H1 (cell line): ENCODE measurements at regions of chr11 and their contacts with region 1.

Region 1: GRCh38 chr11:106087815-106088435 is 10.5 kb downstream of the AASDHPPT start:
- DNase-seq: no peak
- H3K4me3 ChIP-seq: no peak overlapping the region
- H3K27ac ChIP-seq: no peak overlapping the region
- H3K4me1 ChIP-seq: no peaks in the 10 kb centered on the region
- H3K27me3 ChIP-seq: no peaks in the 10 kb centered on the region
- CTCF ChIP-seq: peak in 2 of 3 experiments; percentile 55 to 79; a peak in 3 of 4 replicates
- EP300 ChIP-seq: no peak
- POLR2A ChIP-seq: no peak
- RAD21 ChIP-seq: peak; percentile 78 to 80

Region 2: GRCh38 chr11:105975128-105975527 is 112.8 kb before region 1 on chr11:
- CTCF ChIA-PET with region 1: no interaction called
- POLR2A ChIA-PET with region 1: no interaction called
- DNase-seq: no peak
- H3K4me3 ChIP-seq: no peak overlapping the region
- H3K27ac ChIP-seq: no peak overlapping the region
- H3K4me1 ChIP-seq: no peaks in the 10 kb centered on the region
- H3K27me3 ChIP-seq: no peaks in the 10 kb centered on the region
- CTCF ChIP-seq: no peak
- EP300 ChIP-seq: no peak
- POLR2A ChIP-seq: no peak
- RAD21 ChIP-seq: no peak

Region 3: GRCh38 chr11:106076919-106077608 is 10.9 kb before region 1 on chr11 and contains the start of gene KBTBD3:
- CTCF ChIA-PET with region 1: interaction called, 12 read pairs
- POLR2A ChIA-PET with region 1: interaction called, 6 read pairs
- DNase-seq: peak; percentile 94 to 100
- H3K4me3 ChIP-seq: peak within 1 kb of the TSS; percentile 82 to 93 (median 88)
- H3K27ac ChIP-seq: peak within 1 kb of the TSS; percentile 98
- H3K4me1 ChIP-seq: peaks cover 0 to 7% (median 1%) of the 10 kb centered on the region in 4 experiments; a peak in 2 of 7 replicates
- H3K27me3 ChIP-seq: no peaks in the 10 kb centered on the region
- CTCF ChIP-seq: peak in 2 of 3 experiments; percentile 62 to 71; a peak in 3 of 4 replicates
- EP300 ChIP-seq: 0 out of 3 replicates have a peak, but pooled peaks of 1 of the 2 experiments have one; percentile 74
- POLR2A ChIP-seq: peak; percentile 47 to 100
- RAD21 ChIP-seq: peak; percentile 43 to 55; a peak in 3 of 4 replicates
- total RNA-seq, gene KBTBD3: 4.2 and 6.1 TPM in 2 replicates

Region 4: DNA sequence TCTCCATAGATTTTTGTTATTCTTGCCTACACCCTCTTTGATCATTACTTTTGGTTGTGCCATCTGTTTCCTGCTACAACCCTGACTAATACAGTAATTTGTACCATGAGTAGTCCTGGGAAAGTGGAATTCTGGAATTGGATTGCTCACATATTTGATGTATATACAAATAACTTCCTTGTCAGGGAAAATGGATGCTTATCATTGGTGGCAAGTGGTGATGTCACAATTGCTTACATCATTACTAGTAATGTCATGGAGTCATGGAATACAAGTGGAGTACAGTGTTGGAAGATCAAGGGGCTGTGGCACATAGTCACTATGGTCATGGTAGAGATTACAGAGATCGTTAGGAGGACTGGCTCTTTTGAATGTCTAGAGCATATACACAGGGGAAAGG is 13.9 kb after region 1 on chr11:
- CTCF ChIA-PET with region 1: interaction called, 29 read pairs
- POLR2A ChIA-PET with region 1: interaction called, 3 read pairs
- DNase-seq: no peak
- H3K4me3 ChIP-seq: no peak overlapping the region
- H3K27ac ChIP-seq: no peak overlapping the region
- H3K4me1 ChIP-seq: peaks cover 0 to 5% (median 0%) of the 10 kb centered on the region in 4 experiments; a peak in 2 of 7 replicates
- H3K27me3 ChIP-seq: no peaks in the 10 kb centered on the region
- CTCF ChIP-seq: no peak
- EP300 ChIP-seq: no peak
- POLR2A ChIP-seq: no peak
- RAD21 ChIP-seq: no peak